Pancreas (tissue), 10 donors: ENCODE measurements at regions of chr1 and their contacts with region 1.

Region 1: GRCh38 chr1:205664376-205665108 is 15.8 kb downstream of the SLC45A3 start:
- DNase-seq: no peak
- ATAC-seq: peak; percentile 37 to 69 (median 52)
- H3K4me3 ChIP-seq: no peak overlapping the region
- H3K27ac ChIP-seq: peak overlapping the region in 1 of 4 donors; percentile 44
- H3K4me1 ChIP-seq: no peaks in the 10 kb centered on the region
- H3K27me3 ChIP-seq: no peaks in the 10 kb centered on the region
- CTCF ChIP-seq: no peak

Region 2: DNA sequence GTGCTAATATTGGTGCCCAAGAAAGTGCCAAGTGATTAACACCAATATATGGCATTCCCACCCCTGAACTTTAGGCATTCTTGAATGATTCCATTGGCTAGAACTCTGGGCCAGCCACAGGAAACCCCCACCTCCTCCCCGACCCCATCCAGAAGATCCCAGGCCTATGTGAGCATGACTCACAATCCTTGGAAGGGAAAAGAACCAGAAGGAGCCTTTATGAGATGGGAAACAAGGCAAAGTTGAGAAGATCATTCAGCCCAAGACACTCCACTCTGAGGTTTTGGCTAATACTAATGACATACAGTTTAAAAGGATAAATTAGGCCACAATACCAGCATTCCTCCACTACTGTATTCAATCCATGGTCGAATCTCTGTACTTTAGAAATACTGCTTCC is 54.5 kb before region 1 on chr1:
- intact Hi-C with region 1: no loop called
- DNase-seq: no peak
- ATAC-seq: peak in 3 of 4 donors; percentile 30 to 61 (median 37)
- H3K4me3 ChIP-seq: no peak overlapping the region
- H3K27ac ChIP-seq: peak overlapping the region in 2 of 4 donors; percentile 34 to 42
- H3K4me1 ChIP-seq: peaks cover 7 to 16% (median 9%) of the 10 kb centered on the region in 3 donors
- H3K27me3 ChIP-seq: no peaks in the 10 kb centered on the region
- CTCF ChIP-seq: no peak

Region 3: DNA sequence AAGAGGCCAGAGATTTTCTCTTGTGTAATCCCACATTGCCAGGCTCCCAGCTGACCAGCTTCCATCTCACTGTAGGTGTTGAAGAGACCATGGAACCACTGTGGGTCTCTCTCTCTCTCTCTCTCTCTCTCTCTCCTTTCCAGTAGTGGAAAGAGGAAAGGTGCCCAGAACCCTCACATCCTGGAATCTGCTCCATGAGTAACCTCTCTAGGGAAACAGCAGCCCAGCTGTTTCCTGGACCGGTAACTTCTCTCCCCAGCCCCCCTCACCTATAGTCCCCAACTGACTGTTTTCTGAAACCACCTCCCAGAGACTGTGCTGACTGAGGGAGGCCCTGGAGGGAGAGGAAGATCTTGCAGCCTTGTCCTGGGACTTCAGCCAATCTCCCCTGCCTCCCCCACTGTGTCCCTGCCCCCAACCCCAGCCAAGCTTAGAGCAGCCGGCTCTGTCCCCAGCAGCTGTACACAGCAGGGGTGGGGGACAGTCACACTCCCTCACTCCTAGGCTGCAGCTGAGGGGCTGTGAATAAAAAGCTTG is 36.4 kb after region 1 on chr1:
- intact Hi-C with region 1: loop called in 1 of 3 experiments (anchors 5 kb)
- DNase-seq: peak in 1 of 6 donors; percentile 32
- ATAC-seq: peak in 1 of 4 donors; percentile 22
- H3K4me3 ChIP-seq: no peak overlapping the region
- H3K27ac ChIP-seq: no peak overlapping the region
- H3K4me1 ChIP-seq: no peaks in the 10 kb centered on the region
- H3K27me3 ChIP-seq: no peaks in the 10 kb centered on the region
- CTCF ChIP-seq: no peak

Region 4: DNA sequence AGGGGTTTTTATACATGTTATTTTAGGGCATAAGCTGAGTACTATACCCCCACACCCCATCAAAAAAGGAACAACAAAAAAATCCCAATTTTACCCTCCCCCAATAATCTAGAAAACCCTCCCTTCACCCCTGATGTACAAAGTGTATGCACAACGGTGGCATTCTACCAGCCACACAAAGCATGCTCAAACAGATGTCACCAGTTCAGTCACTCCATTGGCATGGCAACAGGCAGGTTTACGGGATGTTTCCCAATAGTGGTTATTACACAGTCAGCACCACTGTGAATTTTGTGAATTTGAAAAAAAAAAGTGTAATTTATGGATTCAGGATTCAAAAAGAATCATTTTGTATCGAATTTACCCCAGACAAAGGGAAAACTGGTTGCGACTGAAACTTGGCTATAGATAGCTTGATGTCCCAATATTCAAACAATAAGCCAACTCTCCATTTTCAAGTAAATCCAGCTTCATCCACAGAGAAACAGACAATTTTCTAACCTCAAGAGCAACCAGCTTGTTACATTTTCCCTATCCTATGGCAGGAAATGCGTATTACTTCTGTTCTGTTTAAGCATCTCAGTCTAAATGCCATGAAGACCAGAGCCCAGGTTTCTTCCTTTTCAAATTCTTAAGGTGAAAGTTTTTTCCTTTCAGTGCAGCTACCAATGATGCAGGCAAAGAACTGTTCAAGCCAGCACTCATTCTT is 49.8 kb after region 1 on chr1:
- intact Hi-C with region 1: no loop called
- DNase-seq: no peak
- ATAC-seq: peak in 2 of 4 donors; percentile 56 to 59
- H3K4me3 ChIP-seq: no peak overlapping the region
- H3K27ac ChIP-seq: no peak overlapping the region
- H3K4me1 ChIP-seq: no peaks in the 10 kb centered on the region
- H3K27me3 ChIP-seq: no peaks in the 10 kb centered on the region
- CTCF ChIP-seq: no peak

Region 5: DNA sequence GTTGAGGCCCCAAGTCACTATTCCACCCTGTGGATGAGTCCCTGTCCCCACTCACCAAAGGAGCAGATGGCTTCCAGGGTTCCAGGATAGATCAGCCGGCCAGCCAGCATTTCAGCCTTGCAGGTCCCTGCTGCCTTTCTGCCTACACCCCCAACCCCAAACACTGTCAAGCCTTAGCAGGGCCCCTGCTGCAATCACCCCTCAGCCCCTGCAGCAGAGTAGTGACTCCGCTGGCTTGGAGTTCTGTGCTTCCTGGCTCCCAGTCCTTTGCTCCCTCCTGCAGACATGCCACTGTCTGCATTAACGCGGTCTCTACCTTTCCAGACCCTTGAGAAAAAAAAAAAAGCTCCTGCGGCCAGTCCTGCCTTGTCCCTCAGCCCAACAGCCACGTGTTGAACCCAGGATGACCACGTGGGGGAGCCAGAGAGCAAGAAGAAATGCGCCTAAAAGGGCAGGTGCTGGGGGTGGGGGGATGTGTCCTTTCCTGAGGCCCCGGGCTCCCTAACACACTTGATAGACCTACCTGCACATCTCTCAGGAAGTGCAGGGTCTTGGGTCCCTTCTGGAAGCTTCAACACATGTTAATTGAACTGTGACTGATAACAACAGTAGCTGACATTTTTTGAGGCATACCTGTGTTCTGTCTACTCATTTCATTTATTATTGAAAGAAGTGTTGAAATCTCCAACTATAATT is 880.2 kb after region 1 on chr1:
- intact Hi-C with region 1: no loop called
- DNase-seq: peak; percentile 62 to 91 (median 80)
- ATAC-seq: peak; percentile 51 to 73 (median 66)
- H3K4me3 ChIP-seq: no peak overlapping the region
- H3K27ac ChIP-seq: no peak overlapping the region
- H3K4me1 ChIP-seq: peaks cover 14 to 16% (median 15%) of the 10 kb centered on the region in 3 donors
- H3K27me3 ChIP-seq: no peaks in the 10 kb centered on the region
- CTCF ChIP-seq: peak; percentile 73 to 84 (median 82)

Region 6: GRCh38 chr1:206635080-206635977 is 970.8 kb after region 1 on chr1 and contains the start of gene DYRK3:
- intact Hi-C with region 1: no loop called
- DNase-seq: peak; percentile 95 to 99 (median 96)
- ATAC-seq: peak; percentile 97 to 98 (median 98)
- H3K4me3 ChIP-seq: peak within 1 kb of the TSS; percentile 76 to 96 (median 86)
- H3K27ac ChIP-seq: peak within 1 kb of the TSS; percentile 57 to 80 (median 73)
- H3K4me1 ChIP-seq: peaks cover 8 to 20% (median 9%) of the 10 kb centered on the region in 3 donors
- H3K27me3 ChIP-seq: no peaks in the 10 kb centered on the region
- CTCF ChIP-seq: no peak
- total RNA-seq, gene DYRK3: 2.3 to 7.0 (median 3.8) TPM